ENCODE measurements at regions of chr15 and their contacts with region 1.

Region 1: GRCh38 chr15:31396881-31397560 is 70.4 kb downstream of the KLF13 start:
- DNase-seq: peak; percentile 76 to 81 (median 80)
- ATAC-seq: peak; percentile 96
- H3K4me3 ChIP-seq: no peak overlapping the region
- H3K27ac ChIP-seq: no peak overlapping the region
- H3K4me1 ChIP-seq: peaks cover 0 to 34% of the 10 kb centered on the region in 2 experiments; a peak in 3 of 5 replicates
- H3K27me3 ChIP-seq: peaks cover 6 to 13% of the 10 kb centered on the region in 2 experiments
- CTCF ChIP-seq: peak; percentile 10 to 63 (median 60); a peak in 4 of 6 replicates
- EP300 ChIP-seq: no peak
- POLR2A ChIP-seq: no peak
- RAD21 ChIP-seq: peak in 1 of 2 experiments; percentile 69; a peak in 2 of 4 replicates

Region 2: GRCh38 chr15:31326156-31326732 is 70.8 kb before region 1 on chr15:
- CTCF ChIA-PET with region 1: no interaction called
- POLR2A ChIA-PET with region 1: no interaction called
- in situ Hi-C with region 1: no loop called
- intact Hi-C with region 1: loop called (anchors 1 kb)
- DNase-seq: peak; percentile 97 to 99 (median 98)
- ATAC-seq: peak; percentile 94
- H3K4me3 ChIP-seq: peak overlapping the region; percentile 69
- H3K27ac ChIP-seq: peak overlapping the region; percentile 77
- H3K4me1 ChIP-seq: peaks cover 3 to 39% of the 10 kb centered on the region in 2 experiments; a peak in 3 of 5 replicates
- H3K27me3 ChIP-seq: peaks cover 14% of the 10 kb centered on the region in 2 experiments; a peak in 4 of 5 replicates
- CTCF ChIP-seq: no peak
- EP300 ChIP-seq: no peak
- POLR2A ChIP-seq: peak; percentile 70
- RAD21 ChIP-seq: no peak